K562 (cell line): ENCODE measurements at regions of chr7 and their contacts with region 1.

Region 1: GRCh38 chr7:44408596-44408995 is 81.9 kb downstream of the NUDCD3 start:
- DNase-seq: no peak
- ATAC-seq: no peak
- H3K4me3 ChIP-seq: no peak overlapping the region
- H3K27ac ChIP-seq: no peak overlapping the region
- H3K4me1 ChIP-seq: no peaks in the 10 kb centered on the region; a peak in 1 of 5 replicates
- H3K27me3 ChIP-seq: no peaks in the 10 kb centered on the region
- CTCF ChIP-seq: no peak
- EP300 ChIP-seq: no peak
- POLR2A ChIP-seq: no peak
- RAD21 ChIP-seq: no peak

Region 2: DNA sequence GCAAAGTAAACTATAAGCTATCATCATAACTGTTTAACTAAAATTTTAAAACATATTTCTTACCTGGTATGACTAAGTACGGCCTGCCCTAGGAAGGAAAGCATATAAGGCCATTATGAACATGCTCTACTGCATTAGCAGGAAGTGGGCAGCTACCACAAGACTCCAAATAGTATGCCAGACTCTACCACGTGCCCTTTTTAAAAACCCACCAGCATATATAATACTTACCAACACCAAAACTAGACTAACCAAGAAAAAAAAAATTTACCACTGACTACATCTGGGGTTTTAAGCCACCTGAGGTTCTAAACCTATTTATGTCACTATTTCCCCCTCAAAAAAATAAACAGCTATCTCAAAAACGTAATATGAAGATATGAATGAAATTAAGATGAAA is 51.7 kb after region 1 on chr7:
- CTCF ChIA-PET with region 1: no interaction called
- POLR2A ChIA-PET with region 1: no interaction called
- in situ Hi-C with region 1: no loop called
- intact Hi-C with region 1: loop called (anchors 10 kb)
- DNase-seq: no peak
- ATAC-seq: no peak
- H3K4me3 ChIP-seq: no peak overlapping the region
- H3K27ac ChIP-seq: no peak overlapping the region
- H3K4me1 ChIP-seq: peaks cover 0 to 9% of the 10 kb centered on the region in 2 experiments; a peak in 1 of 5 replicates
- H3K27me3 ChIP-seq: no peaks in the 10 kb centered on the region
- CTCF ChIP-seq: no peak
- EP300 ChIP-seq: no peak
- POLR2A ChIP-seq: no peak
- RAD21 ChIP-seq: no peak